ENCODE measurements at regions of chr21 and their contacts with region 1.

Region 1: DNA sequence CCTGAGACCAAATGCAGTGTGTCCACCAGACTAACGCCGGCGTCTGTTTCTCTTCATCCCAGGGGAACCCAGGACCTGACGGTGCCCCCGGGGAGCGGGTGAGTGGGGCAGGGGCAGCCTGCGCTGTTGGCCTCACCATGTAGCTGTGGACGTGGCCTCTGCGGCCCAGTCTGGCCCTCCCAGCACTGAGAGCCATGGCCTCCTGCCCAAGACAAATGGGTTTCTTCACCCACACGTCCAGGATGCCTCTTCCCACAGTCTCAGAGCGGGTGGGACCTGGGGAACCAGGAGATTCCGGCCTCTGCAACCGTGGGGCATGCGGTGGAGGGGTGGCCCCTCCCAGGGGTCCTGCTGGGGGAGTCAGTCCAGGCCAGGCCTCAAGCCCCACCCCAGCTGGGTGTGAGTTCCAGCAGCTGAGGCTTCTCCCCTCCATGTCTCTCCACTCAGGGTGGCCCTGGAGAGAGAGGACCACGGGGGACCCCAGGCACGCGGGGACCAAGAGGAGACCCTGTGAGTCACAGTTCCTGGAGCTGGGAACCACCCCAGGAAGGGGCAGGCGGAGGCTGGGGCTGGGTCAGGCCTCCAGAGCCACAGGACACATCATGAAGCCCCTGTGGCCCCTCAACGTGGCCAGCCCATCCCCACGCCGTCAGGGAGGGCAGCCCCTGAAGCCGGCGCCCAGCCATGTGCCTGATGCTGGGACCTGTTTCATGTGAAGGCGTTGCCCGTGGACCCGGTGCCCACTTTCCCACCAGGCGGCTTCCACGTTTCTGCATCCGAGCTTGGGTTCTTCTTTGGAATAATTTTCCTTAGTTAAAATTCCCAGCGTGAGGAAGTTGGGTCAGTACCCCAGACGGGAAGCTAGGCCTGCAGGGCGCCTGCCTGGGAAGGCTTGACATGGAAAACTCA is 11.0 kb downstream of the COL6A1 start:
- DNase-seq: peak; percentile 82

Region 2: DNA sequence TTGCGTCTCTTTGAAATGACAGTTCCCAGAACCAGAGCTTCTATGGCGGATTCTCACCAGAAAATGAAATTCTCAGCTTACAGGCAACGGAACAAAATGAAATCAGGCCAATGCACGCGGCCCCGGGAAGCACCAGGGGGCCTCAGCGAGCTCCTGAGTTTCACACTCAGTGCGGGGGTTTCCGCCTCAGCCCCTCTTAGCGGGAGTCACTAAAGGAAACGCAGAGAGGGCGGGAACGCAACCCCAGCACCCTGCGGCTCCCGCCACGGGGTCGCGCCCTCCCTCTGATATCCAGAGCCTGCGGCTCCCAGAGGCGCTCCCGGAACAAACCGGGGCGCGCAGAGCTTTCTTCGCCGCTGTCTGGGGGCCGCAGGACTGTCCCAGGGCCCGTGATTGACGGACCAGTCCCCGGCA is 18.9 kb before region 1 on chr21:
- intact Hi-C with region 1: loop called in 1 of 2 experiments (anchors 1 kb)
- DNase-seq: peak; percentile 95

Region 3: DNA sequence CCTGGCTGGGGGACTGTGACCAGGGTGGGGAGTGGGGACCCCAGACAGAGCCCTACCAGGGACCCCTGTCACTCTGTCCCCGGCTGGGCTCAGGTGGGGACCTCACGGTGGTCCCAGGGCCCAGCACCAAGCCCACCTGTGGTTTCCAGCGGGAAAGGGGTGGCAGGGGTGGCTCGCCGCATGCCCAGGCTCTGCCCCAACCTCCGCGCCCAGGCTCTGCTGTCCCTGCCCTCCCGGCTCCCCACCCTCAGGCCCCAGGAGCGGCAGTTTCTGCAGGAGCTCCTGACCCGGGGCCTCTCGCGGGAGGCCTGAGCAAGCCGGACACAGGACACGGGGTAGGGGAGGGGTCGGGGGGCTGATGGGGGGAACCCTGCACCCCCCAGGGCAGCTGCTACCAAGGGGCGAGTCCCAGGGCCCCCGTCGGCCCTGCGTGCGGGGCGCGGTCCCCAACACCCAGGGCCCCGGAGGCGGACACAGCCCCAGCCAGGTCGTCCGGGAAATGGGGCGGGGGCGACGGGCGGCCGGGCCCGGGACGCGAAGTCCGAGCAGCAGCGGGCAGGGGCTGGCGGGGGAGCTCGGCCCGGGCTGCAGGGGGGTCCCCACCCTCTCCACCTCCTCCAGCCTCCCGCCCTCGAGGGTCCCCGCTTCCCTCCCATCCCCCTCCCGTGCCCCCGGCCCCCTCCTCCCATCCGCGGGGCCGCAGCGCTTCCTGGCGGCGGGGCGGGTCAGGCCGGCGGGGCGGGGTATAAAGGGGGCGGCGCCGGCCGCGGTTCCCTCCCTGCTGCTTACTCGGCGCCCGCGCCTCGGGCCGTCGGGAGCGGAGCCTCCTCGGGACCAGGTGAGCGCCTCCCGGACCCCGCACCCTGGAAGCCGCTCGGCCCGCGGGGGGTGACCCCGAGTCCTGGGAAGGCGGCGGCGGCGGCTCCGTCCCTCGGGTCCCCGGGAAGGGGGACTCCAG is 105.1 kb after region 1 on chr21 and contains the start of gene COL6A2:
- intact Hi-C with region 1: loop called in 1 of 2 experiments (anchors 5 kb)
- DNase-seq: peak; percentile 87
- total RNA-seq, gene COL6A2: 1,504 to 1,642 TPM

Region 4: DNA sequence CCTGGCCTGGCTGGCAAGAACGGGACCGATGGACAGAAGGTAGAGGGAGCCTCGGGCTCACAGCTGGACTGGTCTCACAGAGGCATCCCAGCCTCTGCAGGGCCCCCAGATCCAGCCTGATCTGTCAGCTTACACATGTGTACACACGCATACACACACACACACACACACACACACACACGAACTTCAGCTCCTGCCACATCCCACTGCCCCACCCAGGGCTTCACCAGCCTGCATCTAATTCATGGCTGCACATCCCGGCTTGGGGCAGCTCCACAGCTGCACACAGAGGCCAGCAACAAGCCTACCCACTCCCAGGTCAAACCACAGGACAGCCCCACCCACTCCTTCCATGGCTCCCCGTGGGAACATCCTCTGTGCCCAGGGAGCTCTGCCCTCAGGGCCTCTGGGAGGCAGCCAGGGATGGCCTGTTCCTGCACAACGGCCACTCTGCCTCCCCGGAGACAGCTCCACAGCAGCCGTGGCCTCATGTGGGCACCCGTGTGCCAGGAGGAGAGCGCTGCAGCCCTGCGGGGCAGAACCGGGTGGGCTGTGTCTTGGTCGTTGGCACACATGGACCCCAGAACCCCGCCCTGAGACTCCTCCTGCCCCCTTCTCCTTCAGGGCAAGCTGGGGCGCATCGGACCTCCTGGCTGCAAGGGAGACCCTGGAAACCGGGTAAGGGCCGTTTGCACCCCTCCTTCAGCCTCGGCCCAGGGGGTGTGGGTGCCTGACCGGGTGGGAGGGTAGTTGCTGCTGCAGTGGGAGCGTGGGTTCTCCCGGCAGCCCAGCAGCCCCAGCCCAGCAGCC is 124.4 kb after region 1 on chr21:
- intact Hi-C with region 1: loop called in 1 of 2 experiments (anchors 5 kb)
- DNase-seq: peak; percentile 71